Heart left ventricle (tissue), 16 donors: ENCODE measurements at regions of chr1 and their contacts with region 1.

Region 1: DNA sequence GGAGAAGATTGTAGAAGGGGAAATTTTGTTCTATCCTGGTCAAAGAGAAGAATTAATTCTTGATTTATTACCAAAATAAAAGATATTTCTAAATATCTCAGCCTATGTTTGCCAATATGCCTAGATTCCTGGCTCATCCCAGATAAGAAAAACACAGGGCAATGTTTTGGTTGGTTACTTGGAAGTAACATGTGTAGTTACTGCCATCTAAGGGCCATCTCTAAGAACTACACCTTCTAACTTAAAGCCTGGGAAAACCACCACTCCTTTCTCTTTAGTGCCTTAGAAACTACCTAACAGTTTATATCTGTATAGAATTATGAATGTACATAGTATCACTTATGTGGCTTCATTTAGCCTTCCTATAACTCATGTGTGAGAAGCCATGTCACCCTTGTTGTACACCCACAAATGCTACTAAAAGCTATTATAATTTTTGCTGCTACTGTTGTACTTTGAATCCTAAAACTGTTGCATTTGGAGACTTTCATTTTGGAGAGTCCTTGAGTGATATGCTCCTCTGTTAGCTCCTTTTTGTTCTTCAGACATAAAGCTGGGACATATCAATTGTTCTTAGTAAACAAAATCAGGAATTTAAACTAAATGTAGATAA is 4.5 kb downstream of the AIM2 start:
- DNase-seq: no peak
- ATAC-seq: peak in 3 of 4 donors; percentile 58 to 64 (median 61)
- H3K4me3 ChIP-seq: no peak overlapping the region
- H3K27ac ChIP-seq: no peak overlapping the region
- H3K4me1 ChIP-seq: peaks cover 0 to 42% (median 0%) of the 10 kb centered on the region in 12 donors
- H3K27me3 ChIP-seq: no peaks in the 10 kb centered on the region
- CTCF ChIP-seq: peak; percentile 60 to 80 (median 70)
- POLR2A ChIP-seq: no peak

Region 2: DNA sequence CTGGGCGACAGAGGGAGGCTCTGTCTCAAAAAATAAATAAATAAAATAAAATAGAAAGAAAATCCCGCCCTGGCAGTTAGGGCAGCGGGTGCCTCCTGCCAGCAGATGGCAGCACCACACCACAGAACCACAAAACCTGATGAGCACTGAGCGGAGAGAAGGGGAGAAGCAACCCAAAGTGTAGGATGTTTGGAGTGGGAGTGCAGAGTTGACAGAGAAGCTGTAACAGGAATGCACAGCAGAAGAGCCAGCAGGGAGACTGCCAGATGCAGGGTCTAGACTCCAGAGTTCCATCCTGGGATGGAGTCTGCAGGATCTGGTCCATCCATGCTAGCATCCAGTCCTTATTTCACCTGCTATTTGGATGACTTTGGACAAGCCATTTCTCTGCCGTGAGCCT is 1108.4 kb before region 1 on chr1:
- intact Hi-C with region 1: loop called in 2 of 10 experiments (anchors 5 to 10 kb)
- DNase-seq: peak; percentile 50 to 74 (median 60)
- ATAC-seq: peak; percentile 66 to 84 (median 80)
- H3K4me3 ChIP-seq: no peak overlapping the region
- H3K27ac ChIP-seq: no peak overlapping the region
- H3K4me1 ChIP-seq: peaks cover 0 to 9% (median 5%) of the 10 kb centered on the region in 12 donors
- H3K27me3 ChIP-seq: peaks cover 0 to 31% (median 0%) of the 10 kb centered on the region in 9 donors
- CTCF ChIP-seq: peak; percentile 87 to 97 (median 94)
- POLR2A ChIP-seq: no peak

Region 3: DNA sequence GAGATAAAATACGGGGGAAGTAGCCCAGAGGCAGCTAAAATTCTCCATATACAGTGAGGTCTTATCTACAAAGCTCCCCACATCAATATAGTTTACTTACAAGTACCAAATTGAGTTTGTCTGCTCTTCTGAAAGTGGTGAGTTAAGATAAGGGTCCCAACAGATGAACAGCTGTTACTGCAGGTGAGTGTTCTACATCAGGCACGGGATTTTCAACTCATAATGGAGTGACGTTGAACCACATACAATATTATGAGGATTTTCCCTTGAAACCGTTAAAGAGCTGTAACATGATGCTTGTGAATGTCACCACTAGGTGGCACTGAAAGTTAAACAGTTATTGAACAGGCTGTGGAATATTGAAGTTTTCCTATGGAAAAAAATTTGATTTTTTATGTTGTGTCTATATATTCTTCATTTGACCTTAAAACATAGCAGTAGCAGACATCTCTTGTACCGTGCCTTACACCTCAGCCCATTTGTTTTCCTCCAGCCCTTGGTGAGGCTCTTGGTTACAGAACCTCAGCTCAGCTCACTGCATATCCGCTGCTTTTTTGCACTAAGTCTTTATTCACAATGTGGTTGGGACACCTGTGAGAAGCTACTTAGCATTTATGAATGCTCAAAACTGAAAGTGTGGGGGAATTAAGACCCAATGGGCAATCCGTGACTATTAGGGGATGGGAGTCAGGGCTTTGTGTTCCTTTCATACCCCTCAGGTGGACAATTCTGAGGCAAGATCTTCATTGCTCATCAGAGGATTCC is 868.2 kb before region 1 on chr1:
- intact Hi-C with region 1: loop called in 9 of 10 experiments (anchors 2 to 10 kb)
- DNase-seq: no peak
- ATAC-seq: peak; percentile 51 to 77 (median 67)
- H3K4me3 ChIP-seq: no peak overlapping the region
- H3K27ac ChIP-seq: no peak overlapping the region
- H3K4me1 ChIP-seq: peaks cover 0 to 12% (median 0%) of the 10 kb centered on the region in 12 donors
- H3K27me3 ChIP-seq: peaks cover 0 to 8% (median 0%) of the 10 kb centered on the region in 9 donors
- CTCF ChIP-seq: peak; percentile 73 to 90 (median 83)
- POLR2A ChIP-seq: no peak

Region 4: GRCh38 chr1:158506369-158506987 is 565.6 kb before region 1 on chr1:
- intact Hi-C with region 1: loop called in 3 of 10 experiments (anchors 5 to 10 kb)
- DNase-seq: peak in 2 of 5 donors; percentile 12 to 38
- ATAC-seq: no peak
- H3K4me3 ChIP-seq: no peak overlapping the region
- H3K27ac ChIP-seq: no peak overlapping the region
- H3K4me1 ChIP-seq: peaks cover 0 to 12% (median 0%) of the 10 kb centered on the region in 12 donors
- H3K27me3 ChIP-seq: peaks cover 0 to 4% (median 0%) of the 10 kb centered on the region in 9 donors
- CTCF ChIP-seq: peak in 9 of 12 donors; percentile 8 to 53 (median 28)
- POLR2A ChIP-seq: no peak

Region 5: DNA sequence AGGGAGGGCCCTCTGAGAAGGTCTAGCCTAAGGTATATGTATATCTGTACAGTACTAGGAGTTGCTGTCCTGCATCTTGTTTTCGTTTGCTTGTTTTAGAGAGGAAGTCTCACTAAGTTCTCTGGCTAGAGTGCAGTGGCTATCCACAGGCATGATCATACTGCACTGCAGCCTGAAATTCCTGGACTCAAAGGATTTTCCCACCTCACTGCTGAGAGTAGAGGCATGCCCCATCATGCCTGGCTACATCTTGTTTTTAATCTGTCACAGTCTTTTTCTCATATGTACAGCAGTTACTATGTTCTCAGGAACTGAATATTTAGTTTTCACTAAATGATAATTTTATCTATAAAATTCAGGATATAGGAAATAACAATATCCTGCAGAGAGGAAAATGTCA is 156.0 kb before region 1 on chr1:
- intact Hi-C with region 1: no loop called
- DNase-seq: no peak
- ATAC-seq: no peak
- H3K4me3 ChIP-seq: no peak overlapping the region
- H3K27ac ChIP-seq: no peak overlapping the region
- H3K4me1 ChIP-seq: no peaks in the 10 kb centered on the region
- H3K27me3 ChIP-seq: no peaks in the 10 kb centered on the region
- CTCF ChIP-seq: no peak
- POLR2A ChIP-seq: no peak

Region 6: DNA sequence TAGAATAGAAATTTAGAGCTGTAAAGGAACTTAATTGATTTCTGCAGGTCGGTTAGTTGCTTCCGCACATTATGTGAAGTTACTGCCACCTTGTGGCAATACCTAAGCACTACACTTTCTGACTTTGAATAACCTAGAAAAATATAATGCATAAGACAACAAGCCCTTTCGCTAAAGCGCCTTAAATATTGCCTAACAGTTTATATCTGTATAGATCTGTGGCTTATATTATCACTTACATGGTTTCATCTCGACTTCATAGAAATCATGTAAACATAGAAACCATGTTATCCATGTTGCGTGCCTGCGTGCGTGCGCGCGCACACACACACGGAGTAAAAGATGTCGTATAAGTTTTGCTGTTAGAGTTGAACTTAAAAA is 73.3 kb before region 1 on chr1:
- intact Hi-C with region 1: loop called in 1 of 10 experiments (anchors 5 kb)
- DNase-seq: peak in 3 of 5 donors; percentile 28 to 64 (median 59)
- ATAC-seq: peak; percentile 45 to 57 (median 56)
- H3K4me3 ChIP-seq: peak overlapping the region; percentile 13 to 65 (median 50)
- H3K27ac ChIP-seq: peak overlapping the region; percentile 55 to 93 (median 82)
- H3K4me1 ChIP-seq: peaks cover 0 to 25% (median 4%) of the 10 kb centered on the region in 12 donors
- H3K27me3 ChIP-seq: no peaks in the 10 kb centered on the region
- CTCF ChIP-seq: peak; percentile 84 to 97 (median 92)
- POLR2A ChIP-seq: no peak

Region 7: GRCh38 chr1:159009704-159010361 is 62.2 kb before region 1 on chr1 and contains the start of gene IFI16:
- intact Hi-C with region 1: loop called in 1 of 10 experiments (anchors 10 kb)
- DNase-seq: peak in 3 of 5 donors; percentile 56 to 73 (median 63)
- ATAC-seq: peak; percentile 76 to 93 (median 92)
- H3K4me3 ChIP-seq: peak within 1 kb of the TSS; percentile 37 to 82 (median 60)
- H3K27ac ChIP-seq: peak within 1 kb of the TSS; percentile 69 to 99 (median 86)
- H3K4me1 ChIP-seq: peaks cover 0 to 68% (median 20%) of the 10 kb centered on the region in 12 donors
- H3K27me3 ChIP-seq: no peaks in the 10 kb centered on the region
- CTCF ChIP-seq: no peak
- POLR2A ChIP-seq: peak in 1 of 2 donors; percentile 68
- total RNA-seq, gene IFI16: 19.1 to 125 (median 23.7) TPM